H1 (cell line): ENCODE measurements at regions of chr20 and their contacts with region 1.

Region 1: DNA sequence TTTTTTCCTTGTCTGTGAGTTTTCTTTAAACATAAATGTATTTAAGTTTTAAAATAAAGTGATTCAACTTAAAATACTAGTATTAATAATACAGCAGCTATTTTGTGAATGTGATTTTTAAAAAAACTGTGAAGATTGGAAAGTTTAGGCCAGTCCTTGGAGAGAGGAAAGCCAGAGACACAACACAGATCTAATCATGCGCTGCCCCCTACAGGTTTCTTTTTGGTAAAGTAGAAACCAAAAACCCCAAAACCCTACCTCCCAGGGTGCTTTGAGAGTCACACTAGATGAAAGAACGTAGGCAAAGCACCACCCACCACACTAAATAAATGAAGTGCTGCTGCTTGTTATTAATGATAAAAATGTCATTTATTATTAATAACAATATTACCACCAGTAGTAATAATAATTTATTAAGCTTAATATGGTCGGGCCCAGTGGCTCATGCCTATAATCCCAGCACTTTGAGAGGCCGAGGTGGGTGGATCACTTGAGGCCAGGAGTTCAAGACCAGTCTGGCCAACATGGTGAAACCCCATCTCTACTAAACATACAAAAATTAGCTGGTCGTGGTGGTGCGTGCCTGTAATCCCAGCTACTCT is 33.7 kb downstream of the SLC9A8 start:
- DNase-seq: no peak
- H3K4me3 ChIP-seq: no peak overlapping the region
- H3K27ac ChIP-seq: no peak overlapping the region
- H3K4me1 ChIP-seq: peaks cover 0 to 5% (median 4%) of the 10 kb centered on the region in 4 experiments; a peak in 4 of 7 replicates
- H3K27me3 ChIP-seq: no peaks in the 10 kb centered on the region
- CTCF ChIP-seq: peak in 2 of 3 experiments; percentile 60 to 64; a peak in 3 of 4 replicates
- EP300 ChIP-seq: no peak
- POLR2A ChIP-seq: no peak
- RAD21 ChIP-seq: peak; percentile 77 to 79

Region 2: DNA sequence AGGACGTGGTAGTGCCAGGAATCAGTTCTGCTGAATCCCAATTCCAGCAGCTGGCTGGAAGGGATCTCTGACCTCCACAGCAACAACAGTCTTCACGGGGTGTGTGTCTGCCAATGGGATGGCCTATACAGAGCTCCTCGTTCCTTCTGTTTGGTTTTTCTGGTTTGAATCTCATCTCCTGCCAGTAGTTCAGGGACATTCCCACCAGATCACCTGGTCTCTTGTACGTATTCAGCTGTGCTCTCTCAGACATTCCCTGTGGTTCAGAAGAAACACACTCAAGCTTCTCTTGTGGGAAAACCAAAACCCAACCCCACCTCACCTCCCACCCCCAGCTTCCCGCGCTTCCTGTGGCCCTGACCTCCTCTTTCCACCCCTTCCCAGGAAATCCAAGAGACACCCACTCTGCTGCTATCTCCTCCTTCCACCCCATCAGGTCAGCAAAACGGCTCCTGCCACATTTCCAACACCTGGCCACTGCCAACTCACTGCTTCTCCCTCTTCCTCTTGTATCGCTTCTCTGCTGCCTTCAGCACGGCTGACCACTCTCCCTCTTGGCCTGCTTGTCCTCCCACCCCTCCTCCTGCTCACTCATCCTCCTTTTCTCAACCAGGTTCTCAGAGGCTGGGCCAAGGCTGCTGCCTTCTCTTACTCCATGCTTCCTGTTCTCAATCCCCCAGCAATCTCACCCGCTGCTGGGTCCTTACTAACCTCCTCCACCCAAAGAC is 215.1 kb before region 1 on chr20:
- CTCF ChIA-PET with region 1: interaction called, 10 read pairs
- POLR2A ChIA-PET with region 1: no interaction called
- DNase-seq: no peak
- H3K4me3 ChIP-seq: no peak overlapping the region
- H3K27ac ChIP-seq: peak overlapping the region; percentile 24; the same call in 1 of the 2 replicates
- H3K4me1 ChIP-seq: peaks cover 5 to 20% (median 12%) of the 10 kb centered on the region in 4 experiments
- H3K27me3 ChIP-seq: no peaks in the 10 kb centered on the region
- CTCF ChIP-seq: no peak
- EP300 ChIP-seq: no peak
- POLR2A ChIP-seq: peak in 1 of 2 experiments; percentile 26; a peak in 2 of 3 replicates
- RAD21 ChIP-seq: no peak

Region 3: GRCh38 chr20:49775229-49775693 is 71.0 kb before region 1 on chr20:
- CTCF ChIA-PET with region 1: interaction called, 11 read pairs
- POLR2A ChIA-PET with region 1: no interaction called
- DNase-seq: peak; percentile 44 to 52
- H3K4me3 ChIP-seq: no peak overlapping the region
- H3K27ac ChIP-seq: no peak overlapping the region
- H3K4me1 ChIP-seq: peaks cover 5 to 9% (median 6%) of the 10 kb centered on the region in 4 experiments; a peak in 4 of 7 replicates
- H3K27me3 ChIP-seq: no peaks in the 10 kb centered on the region
- CTCF ChIP-seq: no peak
- EP300 ChIP-seq: no peak
- POLR2A ChIP-seq: no peak
- RAD21 ChIP-seq: peak in 1 of 2 experiments; percentile 7; a peak in 1 of 4 replicates

Region 4: GRCh38 chr20:49794336-49795138 is 51.8 kb before region 1 on chr20:
- CTCF ChIA-PET with region 1: interaction called, 13 read pairs
- POLR2A ChIA-PET with region 1: no interaction called
- DNase-seq: no peak
- H3K4me3 ChIP-seq: no peak overlapping the region
- H3K27ac ChIP-seq: no peak overlapping the region
- H3K4me1 ChIP-seq: no peaks in the 10 kb centered on the region; a peak in 1 of 7 replicates
- H3K27me3 ChIP-seq: no peaks in the 10 kb centered on the region
- CTCF ChIP-seq: no peak
- EP300 ChIP-seq: no peak
- POLR2A ChIP-seq: no peak
- RAD21 ChIP-seq: no peak

Region 5: DNA sequence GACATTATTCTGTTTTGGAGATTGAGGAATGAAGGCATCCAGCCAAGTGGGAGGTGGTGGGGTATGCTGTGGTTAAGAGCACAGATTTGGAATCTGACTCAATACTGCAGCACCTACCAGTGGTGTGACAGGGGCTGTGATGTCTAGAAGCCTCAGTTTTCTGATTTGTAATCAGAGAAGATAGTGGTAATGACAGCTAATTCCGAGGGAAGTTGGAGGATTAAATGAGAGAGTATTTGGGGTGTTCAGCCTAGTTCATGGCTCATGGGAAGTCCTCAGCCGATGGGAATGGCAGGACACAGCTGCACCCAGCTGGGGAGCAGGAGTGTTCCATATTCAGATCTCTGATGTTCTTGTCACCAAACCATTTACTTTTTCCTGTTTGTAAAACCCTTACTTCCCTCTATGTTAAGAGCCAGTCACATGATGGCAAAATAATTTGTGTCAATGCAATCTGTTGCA is 24.4 kb before region 1 on chr20:
- CTCF ChIA-PET with region 1: interaction called, 32 read pairs
- POLR2A ChIA-PET with region 1: no interaction called
- DNase-seq: no peak
- H3K4me3 ChIP-seq: no peak overlapping the region
- H3K27ac ChIP-seq: no peak overlapping the region
- H3K4me1 ChIP-seq: no peaks in the 10 kb centered on the region
- H3K27me3 ChIP-seq: no peaks in the 10 kb centered on the region
- CTCF ChIP-seq: peak in 1 of 3 experiments; percentile 15; a peak in 1 of 4 replicates
- EP300 ChIP-seq: no peak
- POLR2A ChIP-seq: no peak
- RAD21 ChIP-seq: peak; percentile 33 to 41; a peak in 3 of 4 replicates

Region 6: DNA sequence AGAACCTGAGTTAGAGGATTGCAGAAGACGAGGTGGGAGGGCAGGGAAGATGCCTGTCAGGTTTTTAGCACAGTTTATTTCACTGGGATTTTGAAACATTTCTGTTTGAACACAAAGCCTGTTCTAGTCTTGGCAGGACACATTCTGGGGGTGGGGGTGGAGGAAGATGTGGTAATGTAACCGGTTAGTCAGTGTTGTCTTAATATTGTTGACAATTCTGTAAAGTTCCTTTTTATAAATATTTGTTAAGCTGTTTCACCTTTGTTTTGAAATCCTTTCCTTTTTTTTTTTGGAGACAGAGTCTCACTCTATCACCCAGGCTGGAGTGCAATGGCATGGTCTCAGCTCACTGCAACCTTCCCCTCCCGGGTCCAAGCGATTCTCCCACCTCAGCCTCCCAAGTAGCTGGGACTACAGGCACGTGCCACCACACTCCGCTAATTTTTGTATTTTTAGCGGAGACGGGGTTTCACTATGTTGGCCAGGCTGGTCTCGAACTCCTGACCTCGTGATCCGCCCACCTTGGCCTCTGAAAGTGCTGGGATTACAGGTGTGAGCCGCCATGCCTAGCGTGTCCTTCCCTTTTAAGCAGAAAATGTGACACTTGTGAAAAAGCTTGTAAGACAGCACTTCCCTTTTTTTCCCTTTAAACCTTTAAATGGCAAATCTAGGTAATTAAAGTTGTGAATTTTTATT is 13.5 kb before region 1 on chr20:
- CTCF ChIA-PET with region 1: interaction called, 39 read pairs
- POLR2A ChIA-PET with region 1: no interaction called
- DNase-seq: no peak
- H3K4me3 ChIP-seq: no peak overlapping the region
- H3K27ac ChIP-seq: no peak overlapping the region
- H3K4me1 ChIP-seq: peaks cover 0 to 8% (median 0%) of the 10 kb centered on the region in 4 experiments; a peak in 3 of 7 replicates
- H3K27me3 ChIP-seq: no peaks in the 10 kb centered on the region
- CTCF ChIP-seq: no peak
- EP300 ChIP-seq: no peak
- POLR2A ChIP-seq: no peak
- RAD21 ChIP-seq: no peak

Region 7: GRCh38 chr20:49868538-49868937 is 22.2 kb after region 1 on chr20:
- CTCF ChIA-PET with region 1: interaction called, 13 read pairs
- POLR2A ChIA-PET with region 1: no interaction called
- DNase-seq: no peak
- H3K4me3 ChIP-seq: no peak overlapping the region
- H3K27ac ChIP-seq: no peak overlapping the region
- H3K4me1 ChIP-seq: no peaks in the 10 kb centered on the region
- H3K27me3 ChIP-seq: 0 out of 7 replicates have a peak, but pooled peaks cover 0 to 2% (median 0%) of the 10 kb centered on the region in 4 experiments
- CTCF ChIP-seq: no peak
- EP300 ChIP-seq: no peak
- POLR2A ChIP-seq: no peak
- RAD21 ChIP-seq: no peak